PC-9 (cell line): ENCODE measurements at regions of chr7 and their contacts with region 1.

Region 1: GRCh38 chr7:142385491-142386340 is 127.9 kb upstream of the PRSS58 start:
- DNase-seq: peak; percentile 64 to 69
- H3K4me3 ChIP-seq: no peak overlapping the region
- H3K27ac ChIP-seq: no peak overlapping the region
- H3K4me1 ChIP-seq: 0 out of 2 replicates have a peak, but pooled peaks cover 12% of the 10 kb centered on the region
- H3K27me3 ChIP-seq: no peaks in the 10 kb centered on the region
- CTCF ChIP-seq: peak; percentile 79

Region 2: GRCh38 chr7:142338633-142339501 is 46.8 kb before region 1 on chr7:
- CTCF ChIA-PET with region 1: interaction called, 6 read pairs
- POLR2A ChIA-PET with region 1: no interaction called
- intact Hi-C with region 1: loop called (anchors 2 kb)
- DNase-seq: peak; percentile 61 to 88
- H3K4me3 ChIP-seq: no peak overlapping the region
- H3K27ac ChIP-seq: no peak overlapping the region
- H3K4me1 ChIP-seq: no peaks in the 10 kb centered on the region
- H3K27me3 ChIP-seq: no peaks in the 10 kb centered on the region
- CTCF ChIP-seq: peak; percentile 76

Region 3: DNA sequence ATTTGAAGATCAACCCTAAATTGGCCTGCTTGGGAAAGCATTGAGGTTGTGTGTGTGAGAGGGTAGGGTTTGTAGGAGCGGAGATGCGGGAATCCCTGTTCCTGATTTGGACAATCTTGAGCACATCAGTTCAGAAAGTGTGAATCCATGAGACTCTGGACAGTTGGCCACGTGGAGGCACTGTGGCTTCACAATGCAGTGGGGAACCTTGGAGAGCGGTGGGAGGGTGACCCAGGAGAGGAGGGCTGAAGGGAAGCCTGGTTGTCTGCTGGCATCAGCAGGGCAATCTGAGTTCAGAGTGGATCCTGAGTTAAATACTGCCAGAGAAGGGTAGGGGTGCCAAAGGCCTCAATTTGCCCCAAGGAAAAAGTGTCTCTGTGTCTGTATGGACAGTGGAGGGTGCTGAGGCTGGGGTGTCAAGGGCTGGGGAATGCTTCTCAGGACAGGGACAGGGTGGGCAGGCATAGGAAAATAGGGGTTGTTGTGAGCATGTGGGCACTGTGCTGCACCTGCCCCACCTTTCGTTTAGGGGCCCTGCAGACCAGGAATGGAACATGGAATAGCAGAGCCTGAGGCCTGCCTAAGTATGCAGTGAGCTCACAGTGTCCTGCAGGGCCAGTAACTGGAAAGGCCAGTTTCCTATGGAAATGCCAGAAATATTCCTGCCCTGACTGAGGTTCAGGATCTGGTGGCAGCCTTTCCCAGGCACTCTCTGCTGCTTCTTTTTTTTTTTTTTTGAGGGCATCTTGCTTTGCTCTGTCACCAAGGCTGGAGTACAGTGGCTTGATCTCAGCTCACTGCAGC is 35.0 kb after region 1 on chr7:
- CTCF ChIA-PET with region 1: no interaction called
- POLR2A ChIA-PET with region 1: no interaction called
- intact Hi-C with region 1: loop called (anchors 2 kb)
- DNase-seq: peak; percentile 74 to 79
- H3K4me3 ChIP-seq: no peak overlapping the region
- H3K27ac ChIP-seq: 0 out of 2 replicates have a peak overlapping the region, but pooled peaks have one; percentile 22
- H3K4me1 ChIP-seq: peaks cover 9% of the 10 kb centered on the region
- H3K27me3 ChIP-seq: no peaks in the 10 kb centered on the region
- CTCF ChIP-seq: peak; percentile 59; the same call in 1 of the 2 replicates

Region 4: DNA sequence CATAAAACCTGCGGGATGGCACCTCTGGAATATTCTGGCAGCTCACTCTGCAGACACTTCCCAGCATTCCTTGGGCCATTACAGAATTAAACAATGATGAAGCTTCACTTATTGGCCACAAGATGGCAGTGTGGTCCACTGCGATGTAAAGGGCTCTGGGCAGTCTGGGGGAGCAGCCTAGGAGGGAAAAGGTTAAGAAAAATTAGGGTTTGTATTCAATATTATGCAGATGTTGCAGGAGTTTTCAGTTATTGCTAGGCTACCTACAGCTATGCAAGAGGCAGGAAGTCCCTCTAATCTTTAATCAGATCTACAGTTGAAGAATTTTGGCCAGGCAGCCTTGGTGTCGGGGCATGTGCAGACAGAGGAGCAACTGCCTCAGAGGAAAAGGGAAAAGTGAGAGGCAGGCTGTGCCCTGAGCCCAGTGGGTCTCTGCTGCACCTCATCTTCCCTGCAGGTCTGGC is 130.4 kb after region 1 on chr7:
- CTCF ChIA-PET with region 1: interaction called, 3 read pairs
- POLR2A ChIA-PET with region 1: no interaction called
- intact Hi-C with region 1: loop called (anchors 1 kb)
- DNase-seq: peak; percentile 72 to 87
- H3K4me3 ChIP-seq: no peak overlapping the region
- H3K27ac ChIP-seq: peak overlapping the region; percentile 79
- H3K4me1 ChIP-seq: peaks cover 48% of the 10 kb centered on the region
- H3K27me3 ChIP-seq: no peaks in the 10 kb centered on the region
- CTCF ChIP-seq: peak; percentile 97

Region 5: DNA sequence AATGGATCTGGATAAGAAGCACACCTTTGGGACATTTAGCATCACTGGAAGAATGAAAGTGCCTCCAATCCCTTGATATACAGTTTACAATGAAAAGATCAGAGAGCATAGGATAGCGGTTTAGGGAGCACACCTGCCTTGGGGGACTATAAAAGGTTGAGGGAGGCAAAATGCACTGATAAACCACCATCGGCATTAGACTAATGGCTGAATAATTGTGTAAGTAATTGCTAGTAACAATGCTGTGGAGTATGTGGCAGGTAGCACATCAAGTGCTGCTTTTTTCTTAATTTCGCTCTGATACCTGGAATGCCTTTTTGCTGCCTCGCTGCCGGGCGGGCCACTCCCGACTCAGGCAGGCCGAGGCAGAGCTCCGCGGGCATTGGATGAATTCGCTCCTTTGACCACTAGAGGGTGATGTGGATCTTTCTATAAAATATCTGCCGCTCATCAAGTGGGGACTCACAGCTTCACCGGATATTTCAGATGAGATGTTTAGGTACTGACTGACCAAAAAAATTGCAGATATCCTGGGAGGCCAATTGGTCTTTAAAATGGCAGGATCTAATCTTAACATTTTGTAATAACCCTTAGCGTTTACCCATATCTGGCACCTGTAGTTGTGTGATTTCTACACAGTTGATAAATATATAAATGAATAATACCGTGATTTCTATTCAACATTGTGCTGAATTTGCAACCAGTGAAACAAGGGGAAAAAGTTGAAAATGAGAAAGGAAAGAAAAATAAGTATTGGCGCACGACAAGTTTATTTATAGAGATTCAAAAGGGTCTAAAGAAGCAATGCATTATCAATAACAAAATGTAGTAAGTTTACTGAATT is 246.8 kb after region 1 on chr7:
- CTCF ChIA-PET with region 1: interaction called, 3 read pairs
- POLR2A ChIA-PET with region 1: no interaction called
- intact Hi-C with region 1: loop called (anchors 1 kb)
- DNase-seq: peak; percentile 70 to 72
- H3K4me3 ChIP-seq: no peak overlapping the region
- H3K27ac ChIP-seq: no peak overlapping the region
- H3K4me1 ChIP-seq: no peaks in the 10 kb centered on the region
- H3K27me3 ChIP-seq: no peaks in the 10 kb centered on the region
- CTCF ChIP-seq: peak; percentile 93

Region 6: GRCh38 chr7:144102041-144102440 is 1716.3 kb after region 1 on chr7:
- CTCF ChIA-PET with region 1: no interaction called
- POLR2A ChIA-PET with region 1: interaction called, 11 read pairs
- intact Hi-C with region 1: no loop called
- DNase-seq: no peak
- H3K4me3 ChIP-seq: no peak overlapping the region
- H3K27ac ChIP-seq: no peak overlapping the region
- H3K4me1 ChIP-seq: no peaks in the 10 kb centered on the region
- H3K27me3 ChIP-seq: no peaks in the 10 kb centered on the region
- CTCF ChIP-seq: no peak